ENCODE measurements at regions of chr3 and their contacts with region 1.

Region 1: GRCh38 chr3:4834403-4834866 is 144.8 kb upstream of the BHLHE40 start:
- DNase-seq: peak; percentile 94
- H3K4me3 Mint-ChIP-seq: peak overlapping the region; percentile 81
- H3K27ac Mint-ChIP-seq: peak overlapping the region; percentile 97
- H3K4me1 Mint-ChIP-seq: peaks cover 83% of the 10 kb centered on the region
- H3K27me3 Mint-ChIP-seq: no peaks in the 10 kb centered on the region

Region 2: DNA sequence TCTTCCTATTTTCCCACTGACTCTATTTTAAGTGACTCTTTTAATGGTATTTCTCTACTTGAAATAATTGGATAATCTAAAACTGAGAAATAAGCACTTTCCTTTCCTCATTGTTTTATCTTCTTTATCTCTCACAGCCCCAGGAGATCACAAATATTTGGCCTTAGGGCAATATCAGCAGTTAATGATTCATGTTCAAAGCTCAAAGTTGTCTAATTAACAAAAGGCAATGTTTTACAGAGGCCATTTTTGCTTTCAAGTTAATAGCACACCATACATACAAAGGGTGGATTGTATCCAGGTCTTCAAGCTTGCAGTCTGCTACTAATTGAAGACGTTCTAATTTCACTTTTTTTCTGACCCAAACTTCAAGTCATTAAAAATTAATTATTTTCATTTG is 915.1 kb before region 1 on chr3:
- intact Hi-C with region 1: no loop called
- DNase-seq: no peak
- H3K4me3 Mint-ChIP-seq: no peak overlapping the region
- H3K27ac Mint-ChIP-seq: no peak overlapping the region
- H3K4me1 Mint-ChIP-seq: no peaks in the 10 kb centered on the region
- H3K27me3 Mint-ChIP-seq: no peaks in the 10 kb centered on the region

Region 3: DNA sequence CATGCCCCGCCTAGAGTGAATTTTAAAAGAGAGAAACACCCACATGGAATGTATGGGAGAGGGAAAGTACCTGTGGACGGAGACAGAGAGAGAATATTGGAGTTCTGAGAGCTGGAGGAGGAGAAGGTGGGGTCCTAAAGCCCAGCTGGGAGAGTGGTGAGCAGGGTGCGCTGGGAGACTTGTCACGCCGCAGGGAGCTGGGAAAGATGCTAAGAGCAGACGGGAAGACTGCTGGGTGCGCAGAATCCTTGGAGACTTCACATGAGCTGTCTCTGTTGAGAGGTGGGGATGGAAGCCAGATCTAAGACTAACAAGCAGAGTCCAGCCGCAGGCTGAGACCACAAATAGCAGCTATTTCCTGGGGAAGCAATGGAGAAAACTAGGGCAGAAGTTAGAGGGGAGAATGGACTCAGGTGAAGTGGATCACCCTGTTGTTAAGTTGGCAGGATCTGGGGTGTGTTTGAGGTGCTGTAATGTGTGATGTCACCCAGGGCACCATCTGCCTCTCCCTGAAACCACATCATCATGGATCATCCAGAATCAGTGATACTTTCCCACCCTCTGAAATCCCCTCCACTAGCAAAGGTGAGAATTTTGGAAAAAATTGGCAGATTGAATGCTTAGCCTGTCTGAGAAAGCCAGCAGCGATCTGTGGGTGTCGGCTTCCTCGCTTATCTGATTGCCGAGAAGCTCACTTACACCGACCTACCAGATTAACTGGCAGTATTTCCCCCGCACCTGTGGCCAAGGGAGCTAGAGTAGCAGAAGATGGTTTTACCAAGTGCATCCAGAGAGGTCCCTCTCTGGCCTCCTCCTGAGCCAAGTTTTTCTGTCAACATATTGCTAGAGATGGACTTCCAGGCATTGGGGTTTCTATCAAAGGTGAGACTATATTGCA is 30.0 kb before region 1 on chr3:
- intact Hi-C with region 1: loop called (anchors 2 kb)
- DNase-seq: peak; percentile 64
- H3K4me3 Mint-ChIP-seq: peak overlapping the region; percentile 30
- H3K27ac Mint-ChIP-seq: peak overlapping the region; percentile 50
- H3K4me1 Mint-ChIP-seq: peaks cover 53% of the 10 kb centered on the region
- H3K27me3 Mint-ChIP-seq: no peaks in the 10 kb centered on the region

Region 4: DNA sequence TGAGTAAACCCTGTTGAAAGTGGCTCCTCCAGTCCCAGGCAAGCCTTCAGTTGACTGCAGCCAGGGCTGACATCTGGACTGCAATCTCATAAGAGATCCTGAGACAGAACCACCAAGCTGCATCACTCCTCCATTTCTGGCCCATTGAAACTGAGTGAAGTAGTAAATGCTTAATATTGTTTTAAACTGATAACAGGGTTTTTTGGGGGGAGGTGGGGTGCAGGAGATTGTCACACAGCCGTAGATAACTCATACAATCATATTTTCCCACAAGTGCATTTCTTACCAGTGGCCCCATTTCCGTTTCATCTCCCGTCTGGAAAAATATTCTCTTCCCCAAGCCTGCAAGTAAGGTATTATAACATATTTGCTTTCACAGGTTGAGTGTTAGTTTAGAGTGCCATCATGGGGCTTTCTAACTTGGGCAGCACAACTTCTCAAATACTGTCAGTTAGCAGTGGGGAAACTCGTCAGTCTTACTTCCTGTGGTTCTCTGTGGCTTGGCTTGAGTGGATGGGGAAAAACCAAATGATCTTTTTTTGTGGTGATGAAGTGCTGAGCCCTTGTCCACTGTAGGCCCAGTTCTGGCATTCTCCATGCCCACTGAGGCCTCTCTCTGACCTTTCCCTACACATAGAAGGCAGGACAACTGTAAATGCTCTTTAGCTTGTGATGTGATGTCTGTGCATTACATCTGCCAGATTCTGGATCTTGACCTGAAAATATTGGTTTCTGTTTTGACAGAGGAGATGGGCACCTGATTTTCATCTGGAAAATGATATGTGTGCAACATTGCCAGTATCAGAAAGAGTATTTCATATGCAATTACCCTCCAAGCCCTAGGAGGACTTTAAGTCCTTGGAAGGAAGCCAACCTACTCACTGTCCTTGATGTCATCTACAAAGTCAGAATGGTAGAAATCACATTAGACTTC is 54.7 kb after region 1 on chr3:
- intact Hi-C with region 1: loop called (anchors 1 kb)
- DNase-seq: peak; percentile 87
- H3K4me3 Mint-ChIP-seq: peak overlapping the region; percentile 49
- H3K27ac Mint-ChIP-seq: peak overlapping the region; percentile 89
- H3K4me1 Mint-ChIP-seq: peaks cover 44% of the 10 kb centered on the region
- H3K27me3 Mint-ChIP-seq: no peaks in the 10 kb centered on the region

Region 5: GRCh38 chr3:4906107-4906621 is 71.7 kb after region 1 on chr3:
- intact Hi-C with region 1: loop called (anchors 1 kb)
- DNase-seq: peak; percentile 71
- H3K4me3 Mint-ChIP-seq: peak overlapping the region; percentile 60
- H3K27ac Mint-ChIP-seq: peak overlapping the region; percentile 88
- H3K4me1 Mint-ChIP-seq: peaks cover 77% of the 10 kb centered on the region
- H3K27me3 Mint-ChIP-seq: no peaks in the 10 kb centered on the region

Region 6: DNA sequence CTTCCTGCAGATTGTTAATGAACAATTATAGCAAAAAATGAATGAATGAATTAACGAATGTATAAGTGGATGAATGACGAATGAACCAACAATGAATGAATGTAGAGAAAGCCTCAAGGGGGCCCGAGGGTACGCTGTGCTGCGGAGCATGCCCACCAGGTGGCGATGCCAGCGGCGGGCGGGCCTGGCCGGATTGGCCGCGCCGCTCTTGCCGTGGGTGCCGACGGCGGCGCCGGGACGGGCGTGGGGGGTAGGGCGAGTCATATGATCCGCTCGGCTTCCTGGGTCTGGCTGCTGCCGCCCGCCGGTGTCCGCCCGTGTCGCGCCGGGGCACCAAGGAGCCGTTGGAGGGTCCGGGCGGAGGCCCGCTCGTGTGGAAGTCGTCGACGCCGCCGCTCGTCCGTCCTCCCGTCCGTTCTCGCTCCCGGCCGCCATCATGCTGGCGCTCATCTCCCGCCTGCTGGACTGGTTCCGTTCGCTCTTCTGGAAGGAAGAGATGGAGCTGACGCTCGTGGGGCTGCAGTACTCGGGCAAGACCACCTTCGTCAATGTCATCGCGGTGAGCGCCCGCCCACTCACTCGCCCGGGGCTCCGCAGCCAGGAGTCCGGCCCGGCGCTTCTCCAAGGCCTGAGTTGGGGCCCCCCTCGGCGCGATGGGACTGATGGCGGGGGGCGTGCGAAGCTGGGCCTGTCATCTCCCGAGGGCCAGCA is 287.8 kb after region 1 on chr3 and contains the start of gene ARL8B:
- intact Hi-C with region 1: loop called (anchors 10 kb)
- DNase-seq: peak; percentile 98
- H3K4me3 Mint-ChIP-seq: peak within 1 kb of the TSS; percentile 85
- H3K27ac Mint-ChIP-seq: peak within 1 kb of the TSS; percentile 96
- H3K4me1 Mint-ChIP-seq: peaks cover 23% of the 10 kb centered on the region
- H3K27me3 Mint-ChIP-seq: no peaks in the 10 kb centered on the region
- total RNA-seq, gene ARL8B: 46.8 and 50.4 TPM in 2 replicates

Measured in activated CD4-positive, alpha-beta T cell treated with anti-CD3 and anti-CD28 coated beads, Interleukin-2, amount 10 ng/mL, durations not matched to agents 24 days and 14 days (primary cell).